ENCODE measurements at regions of chr3 and their contacts with region 1.

Region 1: GRCh38 chr3:112979240-112979832 is 4.4 kb upstream of the CD200R1 start:
- DNase-seq: no peak
- ATAC-seq: no peak
- H3K4me3 Mint-ChIP-seq: no peak overlapping the region
- H3K27ac Mint-ChIP-seq: no peak overlapping the region
- H3K4me1 Mint-ChIP-seq: peaks cover 73% of the 10 kb centered on the region
- H3K27me3 Mint-ChIP-seq: no peaks in the 10 kb centered on the region

Region 2: GRCh38 chr3:112699436-112699978 is 279.8 kb before region 1 on chr3:
- CTCF ChIA-PET with region 1: no interaction called
- POLR2A ChIA-PET with region 1: no interaction called
- intact Hi-C with region 1: no loop called
- DNase-seq: no peak
- ATAC-seq: no peak
- H3K4me3 Mint-ChIP-seq: no peak overlapping the region
- H3K27ac Mint-ChIP-seq: no peak overlapping the region
- H3K4me1 Mint-ChIP-seq: no peaks in the 10 kb centered on the region
- H3K27me3 Mint-ChIP-seq: peaks cover 6% of the 10 kb centered on the region

Region 3: DNA sequence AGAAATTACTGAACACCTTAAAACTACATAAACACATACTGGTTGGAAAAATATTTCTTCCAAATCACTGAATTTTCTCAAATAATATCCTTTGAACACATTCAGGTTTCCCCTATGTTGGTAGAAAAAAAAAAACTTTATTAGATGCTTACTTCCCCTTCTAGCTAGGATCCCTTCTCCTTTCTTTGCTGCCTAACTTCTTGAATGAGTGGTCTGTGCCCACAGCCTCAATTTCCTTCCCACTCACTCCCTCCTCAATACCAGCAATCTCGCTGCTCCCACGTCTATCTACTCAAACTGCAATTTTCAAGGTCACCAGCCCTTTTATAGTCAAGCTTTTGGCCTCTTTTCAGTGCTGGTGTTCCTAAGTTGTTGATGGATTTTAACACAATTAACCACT is 12.7 kb before region 1 on chr3:
- CTCF ChIA-PET with region 1: interaction called, 24 read pairs
- POLR2A ChIA-PET with region 1: no interaction called
- intact Hi-C with region 1: no loop called
- DNase-seq: no peak
- ATAC-seq: no peak
- H3K4me3 Mint-ChIP-seq: peak overlapping the region; percentile 4
- H3K27ac Mint-ChIP-seq: no peak overlapping the region
- H3K4me1 Mint-ChIP-seq: peaks cover 55% of the 10 kb centered on the region
- H3K27me3 Mint-ChIP-seq: peaks cover under 1% of the 10 kb centered on the region

Region 4: DNA sequence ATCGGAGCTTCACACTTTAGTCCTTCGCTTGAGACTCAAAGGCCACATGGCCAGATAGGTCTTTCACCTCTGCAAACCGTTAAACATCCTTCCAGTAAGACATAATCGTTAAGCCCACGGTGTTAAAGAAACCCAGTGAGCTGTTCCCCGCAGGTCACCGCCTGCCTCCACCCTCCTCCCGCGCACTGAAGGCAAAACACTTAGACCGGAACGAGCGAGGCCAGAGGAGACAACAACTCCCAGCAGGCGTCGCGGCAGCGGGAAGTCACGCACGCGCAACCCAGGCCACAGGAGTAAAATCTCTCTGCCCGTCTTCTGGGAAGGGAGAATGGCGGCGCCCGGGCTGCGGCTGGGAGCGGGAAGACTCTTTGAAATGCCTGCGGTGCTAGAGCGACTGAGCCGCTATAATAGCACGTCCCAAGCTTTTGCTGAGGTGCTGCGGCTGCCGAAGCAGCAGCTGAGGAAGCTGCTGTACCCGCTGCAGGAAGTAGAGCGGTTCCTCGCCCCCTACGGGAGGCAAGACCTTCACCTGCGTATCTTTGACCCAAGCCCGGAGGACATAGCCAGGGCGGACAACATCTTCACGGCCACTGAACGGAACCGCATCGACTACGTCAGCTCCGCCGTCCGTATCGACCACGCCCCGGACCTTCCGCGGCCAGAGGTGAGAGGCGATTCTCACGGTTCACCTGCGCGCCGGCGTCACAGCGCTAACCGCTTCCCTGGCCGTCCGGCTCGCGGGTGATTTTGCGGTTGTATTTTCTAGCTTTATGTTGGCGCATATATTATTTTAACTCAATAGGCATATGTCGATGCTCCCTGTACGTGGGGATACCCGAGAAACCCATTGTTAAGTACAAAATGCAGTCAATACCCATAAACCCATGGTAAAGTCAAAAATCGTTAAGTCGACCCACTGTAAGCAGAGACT is 11.6 kb after region 1 on chr3 and contains the start of gene GTPBP8:
- CTCF ChIA-PET with region 1: interaction called, 48 read pairs
- POLR2A ChIA-PET with region 1: interaction called, 7 read pairs
- intact Hi-C with region 1: no loop called
- DNase-seq: peak; percentile 95
- ATAC-seq: peak; percentile 96
- H3K4me3 Mint-ChIP-seq: peak within 1 kb of the TSS; percentile 81
- H3K27ac Mint-ChIP-seq: peak within 1 kb of the TSS; percentile 94
- H3K4me1 Mint-ChIP-seq: peaks cover 70% of the 10 kb centered on the region
- H3K27me3 Mint-ChIP-seq: no peaks in the 10 kb centered on the region
- total RNA-seq, gene GTPBP8: 34.3 to 43.0 TPM

Measured in activated CD4-positive, alpha-beta T cell treated with anti-CD3 and anti-CD28 coated beads for 36 hours (primary cell).